ENCODE measurements at regions of chr1 and their contacts with region 1.

Region 1: GRCh38 chr1:103986792-103987191 is 237.1 kb downstream of the AMY1C start:
- DNase-seq: no peak

Region 2: DNA sequence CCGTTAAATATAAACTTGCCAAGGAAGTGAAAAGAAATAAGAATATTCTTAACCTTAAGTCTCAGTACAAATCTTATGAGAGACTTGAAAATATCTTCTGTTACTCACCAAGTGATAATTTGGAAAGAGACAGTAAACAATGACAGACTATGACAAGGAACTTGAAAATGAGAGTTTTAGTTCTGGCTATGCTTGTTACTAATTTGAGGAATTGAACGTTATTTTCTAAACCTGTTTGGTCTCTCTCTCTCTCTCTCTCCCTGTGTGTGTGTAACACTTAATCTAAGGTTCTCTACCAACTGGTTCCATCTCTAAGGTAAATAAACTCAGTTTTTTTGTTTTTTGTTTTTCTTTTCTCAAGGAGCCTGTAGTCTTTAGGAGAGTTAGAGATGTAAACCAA is 75.3 kb before region 1 on chr1:
- intact Hi-C with region 1: loop called (anchors 2 kb)
- DNase-seq: no peak

Region 3: GRCh38 chr1:104056786-104057185 is 70.0 kb after region 1 on chr1:
- intact Hi-C with region 1: no loop called
- DNase-seq: no peak